Vagina (tissue), 2 donors: ENCODE measurements at regions of chr6 and their contacts with region 1.

Region 1: GRCh38 chr6:48754641-48755040 is 643.6 kb upstream of the PTCHD4 start:
- DNase-seq: no peak
- H3K4me3 ChIP-seq: no peak overlapping the region
- H3K27ac ChIP-seq: no peak overlapping the region
- H3K4me1 ChIP-seq: no peaks in the 10 kb centered on the region
- H3K27me3 ChIP-seq: no peaks in the 10 kb centered on the region
- CTCF ChIP-seq: no peak
- POLR2A ChIP-seq: no peak

Region 2: DNA sequence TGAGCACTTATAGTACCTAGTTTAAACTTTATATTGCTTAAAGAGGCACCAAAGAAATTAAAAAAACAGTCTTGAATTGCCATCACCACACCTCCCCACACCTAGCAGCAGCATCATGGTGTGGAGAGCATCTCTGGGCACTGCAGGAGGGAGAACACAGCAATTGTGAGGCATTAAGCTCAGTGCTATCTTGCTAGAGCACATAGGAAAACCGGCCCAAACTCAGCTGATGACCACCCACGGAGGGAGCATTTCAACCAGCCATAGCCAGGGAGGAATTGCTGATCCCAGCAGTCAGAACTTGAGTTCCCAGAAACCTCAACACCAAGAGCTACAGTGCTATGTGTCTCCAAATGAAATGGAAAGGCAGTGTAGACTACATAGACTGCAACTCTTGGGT is 1234.3 kb after region 1 on chr6:
- intact Hi-C with region 1: loop called (anchors 5 kb)
- DNase-seq: no peak
- H3K4me3 ChIP-seq: no peak overlapping the region
- H3K27ac ChIP-seq: no peak overlapping the region
- H3K4me1 ChIP-seq: no peaks in the 10 kb centered on the region
- H3K27me3 ChIP-seq: no peaks in the 10 kb centered on the region
- CTCF ChIP-seq: no peak
- POLR2A ChIP-seq: no peak